ENCODE measurements at regions of chr17 and their contacts with region 1.

Region 1: GRCh38 chr17:310111-311010 is 42.2 kb downstream of the RPH3AL start:
- DNase-seq: peak in 7 of 10 donors; percentile 35 to 89 (median 64)
- H3K4me3 ChIP-seq: no peak overlapping the region
- H3K27ac ChIP-seq: peak overlapping the region in 50 of 59 donors; percentile 2 to 91 (median 62)
- H3K27me3 ChIP-seq: peaks cover 0 to 6% (median 0%) of the 10 kb centered on the region in 45 donors
- CTCF ChIP-seq: no peak

Region 2: GRCh38 chr17:259991-260791 is 50.2 kb before region 1 on chr17:
- intact Hi-C with region 1: no loop called
- DNase-seq: peak in 7 of 10 donors; percentile 1 to 40 (median 16)
- H3K4me3 ChIP-seq: no peak overlapping the region
- H3K27ac ChIP-seq: no peak overlapping the region
- H3K27me3 ChIP-seq: peaks cover 0 to 4% (median 0%) of the 10 kb centered on the region in 45 donors
- CTCF ChIP-seq: no peak

Region 3: DNA sequence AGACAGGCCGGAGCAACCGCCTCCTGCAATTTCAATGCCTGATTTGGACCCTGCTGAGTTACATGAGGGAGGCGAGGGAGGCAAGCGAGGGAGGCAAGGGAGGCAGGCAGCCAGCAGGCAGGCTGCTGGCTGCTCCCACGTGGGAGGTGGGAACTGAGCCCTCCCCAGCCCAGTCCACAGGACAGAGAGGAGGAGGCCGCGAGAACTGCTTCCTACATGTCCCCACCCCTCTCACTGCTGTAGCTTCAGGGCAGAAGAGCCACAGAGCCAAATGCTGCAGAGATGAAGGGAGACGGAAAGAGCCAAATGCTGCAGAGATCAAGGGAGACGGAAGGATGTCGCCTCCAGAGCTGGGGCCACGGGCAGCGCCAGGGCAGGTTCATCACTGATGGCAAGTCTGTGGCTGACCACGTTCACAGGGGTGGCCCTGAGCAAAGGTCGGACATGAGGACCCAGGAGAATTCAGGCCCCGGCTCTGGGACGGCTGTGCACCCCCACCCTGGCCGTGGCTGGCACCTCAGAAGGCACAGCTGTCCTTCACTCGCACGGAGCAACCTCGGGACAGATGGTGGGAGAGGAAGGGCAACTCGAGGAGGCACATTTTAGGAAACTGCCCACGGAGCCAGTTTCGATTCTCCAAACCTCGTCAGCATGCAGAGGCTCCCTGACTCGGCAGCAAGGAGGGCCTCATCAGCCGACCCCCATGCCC is 20.8 kb after region 1 on chr17:
- intact Hi-C with region 1: loop called in 1 of 2 experiments (anchors 2 kb)
- DNase-seq: peak; percentile 38 to 77 (median 56)
- H3K4me3 ChIP-seq: peak overlapping the region in 58 of 59 donors; percentile 4 to 67 (median 41)
- H3K27ac ChIP-seq: peak overlapping the region in 55 of 59 donors; percentile 4 to 89 (median 78)
- H3K27me3 ChIP-seq: no peaks in the 10 kb centered on the region
- CTCF ChIP-seq: no peak

Measured in dorsolateral prefrontal cortex (tissue), 120 donors.